ENCODE measurements at regions of chr17 and their contacts with region 1.

Region 1: GRCh38 chr17:75896415-75897159 is at the start of gene TRIM65:
- DNase-seq: peak; percentile 86
- ATAC-seq: peak; percentile 87
- H3K4me3 Mint-ChIP-seq: peak within 1 kb of the TSS; percentile 82
- H3K27ac Mint-ChIP-seq: peak within 1 kb of the TSS; percentile 84
- H3K4me1 Mint-ChIP-seq: peaks cover 23% of the 10 kb centered on the region
- H3K27me3 Mint-ChIP-seq: no peaks in the 10 kb centered on the region
- total RNA-seq, gene TRIM65: 33.3 to 33.6 TPM

Region 2: GRCh38 chr17:75784473-75785015 is 112.0 kb before region 1 on chr17 and contains the start of gene UNK:
- CTCF ChIA-PET with region 1: interaction called, 10 read pairs
- DNase-seq: peak; percentile 99
- ATAC-seq: peak; percentile 72
- H3K4me3 Mint-ChIP-seq: peak within 1 kb of the TSS; percentile 79
- H3K27ac Mint-ChIP-seq: peak within 1 kb of the TSS; percentile 100
- H3K4me1 Mint-ChIP-seq: peaks cover 50% of the 10 kb centered on the region
- H3K27me3 Mint-ChIP-seq: peaks cover 1% of the 10 kb centered on the region
- total RNA-seq, gene UNK: 32.8 to 33.1 TPM

Region 3: GRCh38 chr17:75855310-75856081 is 41.1 kb before region 1 on chr17 and contains the start of gene WBP2:
- CTCF ChIA-PET with region 1: interaction called, 46 read pairs
- DNase-seq: peak; percentile 99
- ATAC-seq: peak; percentile 90
- H3K4me3 Mint-ChIP-seq: no peak within 1 kb of the TSS
- H3K27ac Mint-ChIP-seq: peak within 1 kb of the TSS; percentile 95
- H3K4me1 Mint-ChIP-seq: peaks cover 38% of the 10 kb centered on the region
- H3K27me3 Mint-ChIP-seq: no peaks in the 10 kb centered on the region
- total RNA-seq, gene WBP2: 71.3 to 79.1 TPM

Region 4: GRCh38 chr17:75872434-75873351 is 23.9 kb before region 1 on chr17:
- CTCF ChIA-PET with region 1: interaction called, 101 read pairs
- DNase-seq: peak; percentile 87
- ATAC-seq: peak; percentile 68
- H3K4me3 Mint-ChIP-seq: no peak overlapping the region
- H3K27ac Mint-ChIP-seq: peak overlapping the region; percentile 94
- H3K4me1 Mint-ChIP-seq: peaks cover 35% of the 10 kb centered on the region
- H3K27me3 Mint-ChIP-seq: peaks cover 2% of the 10 kb centered on the region

Region 5: DNA sequence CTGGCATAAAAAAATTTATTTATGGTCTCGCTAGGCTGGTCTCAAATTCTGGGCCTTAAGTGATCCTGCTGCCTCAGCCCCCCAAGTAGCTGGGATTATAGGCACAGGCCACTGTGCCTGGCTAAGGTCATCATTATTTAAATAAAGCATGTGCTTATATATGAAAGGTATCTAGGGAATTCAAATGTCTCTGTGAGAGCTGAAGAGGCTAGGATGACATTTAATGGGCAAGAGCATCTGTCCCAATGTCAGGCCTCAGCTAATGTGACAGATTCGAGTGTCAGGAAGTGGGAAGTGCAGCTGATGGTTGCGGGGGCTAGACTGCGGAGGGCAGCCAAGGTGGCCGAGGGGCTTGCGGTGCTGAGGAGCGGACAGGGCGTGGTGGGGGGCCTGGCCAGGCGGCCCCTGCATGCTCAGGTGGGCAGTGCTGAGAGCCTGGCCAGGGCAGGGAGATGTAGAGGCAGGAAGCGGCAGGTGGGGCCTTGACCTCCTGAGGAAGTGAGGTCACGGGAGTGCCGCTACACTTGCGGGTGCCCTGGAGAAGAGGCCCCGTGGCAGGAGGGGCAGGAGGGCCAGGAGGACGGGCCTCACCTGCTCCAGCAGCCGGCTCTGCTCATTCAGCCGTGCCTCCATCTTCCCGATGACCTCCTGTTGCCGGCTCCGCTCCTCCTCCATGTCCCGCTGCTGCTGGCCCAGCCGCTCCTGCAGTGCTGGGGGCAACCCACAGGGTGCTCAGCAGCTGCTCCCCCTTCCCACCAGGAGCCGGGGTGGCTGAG is 20.7 kb after region 1 on chr17:
- CTCF ChIA-PET with region 1: no interaction called
- DNase-seq: no peak
- ATAC-seq: peak; percentile 21
- H3K4me3 Mint-ChIP-seq: no peak overlapping the region
- H3K27ac Mint-ChIP-seq: peak overlapping the region; percentile 16
- H3K4me1 Mint-ChIP-seq: peaks cover 10% of the 10 kb centered on the region
- H3K27me3 Mint-ChIP-seq: no peaks in the 10 kb centered on the region

Region 6: DNA sequence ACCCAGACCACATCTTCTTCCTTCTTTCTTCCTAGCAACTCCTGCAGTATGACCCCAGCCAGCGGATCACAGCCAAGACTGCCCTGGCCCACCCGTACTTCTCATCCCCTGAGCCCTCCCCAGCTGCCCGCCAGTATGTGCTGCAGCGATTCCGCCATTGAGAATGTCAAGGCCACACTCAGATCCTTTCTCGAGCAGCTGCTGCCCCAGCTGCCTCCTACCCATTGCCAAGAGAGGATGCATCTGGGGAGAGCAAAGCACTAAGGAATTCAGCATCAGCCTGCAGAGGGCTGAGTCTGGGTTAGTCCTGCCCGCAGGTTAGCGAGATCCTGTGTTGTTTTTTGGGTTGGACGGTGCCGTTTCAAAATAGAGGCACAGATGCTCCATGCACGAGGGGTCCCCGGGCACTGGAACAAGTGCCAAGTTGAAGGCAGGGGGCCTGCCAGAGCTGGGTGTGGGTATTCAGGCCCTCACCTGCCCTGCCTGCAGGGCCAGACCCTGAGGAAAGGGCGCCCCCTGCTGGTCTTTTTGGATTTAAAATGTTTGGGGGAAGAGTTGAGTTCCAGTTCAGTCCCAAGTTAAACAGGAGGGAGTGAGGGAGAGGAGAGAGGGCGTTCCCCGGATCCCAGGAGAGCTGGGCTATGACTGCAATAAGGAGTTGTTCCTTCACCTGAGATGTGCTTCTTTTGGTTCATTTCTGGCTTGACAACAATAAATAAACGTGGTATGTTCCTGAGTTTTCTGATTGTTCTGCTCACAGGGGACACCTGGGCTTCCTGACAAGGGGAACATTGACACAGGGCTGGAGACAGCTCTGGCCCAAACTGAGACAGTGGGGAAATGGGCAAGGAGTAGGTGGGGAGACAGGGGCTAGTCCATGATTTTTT is 108.9 kb after region 1 on chr17:
- CTCF ChIA-PET with region 1: interaction called, 102 read pairs
- DNase-seq: peak; percentile 88
- ATAC-seq: peak; percentile 75
- H3K4me3 Mint-ChIP-seq: no peak overlapping the region
- H3K27ac Mint-ChIP-seq: peak overlapping the region; percentile 14
- H3K4me1 Mint-ChIP-seq: no peaks in the 10 kb centered on the region
- H3K27me3 Mint-ChIP-seq: no peaks in the 10 kb centered on the region

Region 7: GRCh38 chr17:76053246-76054116 is 156.9 kb after region 1 on chr17:
- CTCF ChIA-PET with region 1: no interaction called
- DNase-seq: no peak
- ATAC-seq: no peak
- H3K4me3 Mint-ChIP-seq: no peak overlapping the region
- H3K27ac Mint-ChIP-seq: peak overlapping the region; percentile 42
- H3K4me1 Mint-ChIP-seq: peaks cover 9% of the 10 kb centered on the region
- H3K27me3 Mint-ChIP-seq: no peaks in the 10 kb centered on the region

Region 8: GRCh38 chr17:76182016-76182764 is 285.6 kb after region 1 on chr17:
- CTCF ChIA-PET with region 1: no interaction called
- DNase-seq: peak; percentile 98
- ATAC-seq: peak; percentile 87
- H3K4me3 Mint-ChIP-seq: no peak overlapping the region
- H3K27ac Mint-ChIP-seq: peak overlapping the region; percentile 94
- H3K4me1 Mint-ChIP-seq: peaks cover 59% of the 10 kb centered on the region
- H3K27me3 Mint-ChIP-seq: no peaks in the 10 kb centered on the region

Measured in activated CD8-positive, alpha-beta memory T cell treated with anti-CD3 and anti-CD28 coated beads, Interleukin-2, amount 10 ng/mL, durations not matched to agents 7 days and 5 days (primary cell).